H1 (cell line): ENCODE measurements at regions of chr7 and their contacts with region 1.

Region 1: GRCh38 chr7:111752022-111752582 is 189.8 kb upstream of the IMMP2L start:
- DNase-seq: peak in 1 of 2 experiments; percentile 86
- H3K4me3 ChIP-seq: no peak overlapping the region
- H3K27ac ChIP-seq: no peak overlapping the region
- H3K4me1 ChIP-seq: peaks cover 0 to 3% (median 0%) of the 10 kb centered on the region in 4 experiments; a peak in 3 of 7 replicates
- H3K27me3 ChIP-seq: no peaks in the 10 kb centered on the region
- CTCF ChIP-seq: peak; percentile 75 to 84 (median 84)
- EP300 ChIP-seq: no peak
- POLR2A ChIP-seq: no peak
- RAD21 ChIP-seq: peak; percentile 76 to 79

Region 2: DNA sequence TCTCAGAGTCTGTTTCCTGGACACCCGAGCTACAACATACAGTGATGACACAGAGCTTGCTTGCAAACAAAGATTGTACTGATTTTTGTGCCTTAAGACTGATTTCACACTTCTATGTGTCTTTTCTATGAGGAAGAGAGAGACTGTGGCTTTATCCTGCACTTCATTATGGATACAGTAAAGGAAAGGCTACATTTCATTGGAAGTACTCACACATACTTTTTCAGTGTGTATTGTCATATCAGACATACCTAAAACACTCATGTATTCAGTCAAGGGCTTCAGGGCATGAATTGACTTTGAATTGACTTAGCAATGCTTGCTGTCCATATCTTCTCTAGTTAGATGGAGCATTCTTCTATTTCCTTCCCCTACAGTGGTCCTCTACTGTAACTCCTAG is 54.3 kb before region 1 on chr7:
- CTCF ChIA-PET with region 1: no interaction called
- POLR2A ChIA-PET with region 1: no interaction called
- DNase-seq: no peak
- H3K4me3 ChIP-seq: no peak overlapping the region
- H3K27ac ChIP-seq: no peak overlapping the region
- H3K4me1 ChIP-seq: no peaks in the 10 kb centered on the region
- H3K27me3 ChIP-seq: no peaks in the 10 kb centered on the region
- CTCF ChIP-seq: no peak
- EP300 ChIP-seq: no peak
- POLR2A ChIP-seq: no peak
- RAD21 ChIP-seq: no peak

Region 3: GRCh38 chr7:111741811-111742240 is 10.3 kb before region 1 on chr7:
- CTCF ChIA-PET with region 1: interaction called, 59 read pairs
- POLR2A ChIA-PET with region 1: interaction called, 5 read pairs
- DNase-seq: no peak
- H3K4me3 ChIP-seq: no peak overlapping the region
- H3K27ac ChIP-seq: no peak overlapping the region
- H3K4me1 ChIP-seq: peaks cover 0 to 9% (median 0%) of the 10 kb centered on the region in 4 experiments; a peak in 1 of 7 replicates
- H3K27me3 ChIP-seq: no peaks in the 10 kb centered on the region
- CTCF ChIP-seq: peak in 2 of 3 experiments; percentile 79 to 87; a peak in 3 of 4 replicates
- EP300 ChIP-seq: no peak
- POLR2A ChIP-seq: no peak
- RAD21 ChIP-seq: peak; percentile 86 to 91

Region 4: GRCh38 chr7:111763221-111763801 is 11.2 kb after region 1 on chr7:
- CTCF ChIA-PET with region 1: interaction called, 30 read pairs
- POLR2A ChIA-PET with region 1: no interaction called
- DNase-seq: no peak
- H3K4me3 ChIP-seq: no peak overlapping the region
- H3K27ac ChIP-seq: no peak overlapping the region
- H3K4me1 ChIP-seq: no peaks in the 10 kb centered on the region; a peak in 1 of 7 replicates
- H3K27me3 ChIP-seq: peaks cover 0 to 2% (median 0%) of the 10 kb centered on the region in 4 experiments; a peak in 1 of 7 replicates
- CTCF ChIP-seq: peak; percentile 44 to 62 (median 58)
- EP300 ChIP-seq: no peak
- POLR2A ChIP-seq: no peak
- RAD21 ChIP-seq: peak; percentile 63 to 66

Region 5: GRCh38 chr7:111780527-111780926 is 28.4 kb after region 1 on chr7:
- CTCF ChIA-PET with region 1: interaction called, 10 read pairs
- POLR2A ChIA-PET with region 1: no interaction called
- DNase-seq: no peak
- H3K4me3 ChIP-seq: no peak overlapping the region
- H3K27ac ChIP-seq: no peak overlapping the region
- H3K4me1 ChIP-seq: peaks cover 0 to 7% (median 1%) of the 10 kb centered on the region in 4 experiments; a peak in 4 of 7 replicates
- H3K27me3 ChIP-seq: no peaks in the 10 kb centered on the region
- CTCF ChIP-seq: no peak
- EP300 ChIP-seq: no peak
- POLR2A ChIP-seq: no peak
- RAD21 ChIP-seq: no peak